PC-3 (cell line): ENCODE measurements at regions of chr21 and their contacts with region 1.

Region 1: GRCh38 chr21:44880762-44881585 is 7.5 kb upstream of the PTTG1IP start:
- DNase-seq: peak; percentile 72
- ATAC-seq: peak; percentile 62
- H3K4me3 ChIP-seq: no peak overlapping the region
- H3K27ac ChIP-seq: peak overlapping the region; percentile 22
- H3K4me1 ChIP-seq: peaks cover 51% of the 10 kb centered on the region
- H3K27me3 ChIP-seq: no peaks in the 10 kb centered on the region
- CTCF ChIP-seq: no peak

Region 2: GRCh38 chr21:44736291-44737004 is 144.5 kb before region 1 on chr21:
- CTCF ChIA-PET with region 1: no interaction called
- POLR2A ChIA-PET with region 1: no interaction called
- intact Hi-C with region 1: no loop called
- DNase-seq: peak; percentile 93
- ATAC-seq: peak; percentile 77
- H3K4me3 ChIP-seq: no peak overlapping the region
- H3K27ac ChIP-seq: peak overlapping the region; percentile 67
- H3K4me1 ChIP-seq: peaks cover 24% of the 10 kb centered on the region
- H3K27me3 ChIP-seq: no peaks in the 10 kb centered on the region
- CTCF ChIP-seq: no peak

Region 3: GRCh38 chr21:44916892-44917291 is 35.9 kb after region 1 on chr21:
- CTCF ChIA-PET with region 1: no interaction called
- POLR2A ChIA-PET with region 1: interaction called, 15 read pairs
- intact Hi-C with region 1: loop called (anchors 5 kb)
- DNase-seq: peak; percentile 94
- ATAC-seq: peak; percentile 66
- H3K4me3 ChIP-seq: peak overlapping the region; percentile 4; the same call in 1 of the 2 replicates
- H3K27ac ChIP-seq: peak overlapping the region; percentile 73
- H3K4me1 ChIP-seq: peaks cover 57% of the 10 kb centered on the region
- H3K27me3 ChIP-seq: no peaks in the 10 kb centered on the region
- CTCF ChIP-seq: no peak

Region 4: GRCh38 chr21:45098867-45099266 is 217.9 kb after region 1 on chr21:
- CTCF ChIA-PET with region 1: no interaction called
- POLR2A ChIA-PET with region 1: no interaction called
- intact Hi-C with region 1: no loop called
- DNase-seq: peak; percentile 52
- ATAC-seq: peak; percentile 48
- H3K4me3 ChIP-seq: no peak overlapping the region
- H3K27ac ChIP-seq: no peak overlapping the region
- H3K4me1 ChIP-seq: peaks cover 16% of the 10 kb centered on the region
- H3K27me3 ChIP-seq: no peaks in the 10 kb centered on the region
- CTCF ChIP-seq: peak; percentile 80